ENCODE measurements at regions of chr11 and their contacts with region 1.

Region 1: GRCh38 chr11:124402326-124402922 is 3.6 kb upstream of the OR8B3 start:
- DNase-seq: peak; percentile 90
- H3K4me3 Mint-ChIP-seq: no peak overlapping the region
- H3K27ac Mint-ChIP-seq: no peak overlapping the region
- H3K4me1 Mint-ChIP-seq: no peaks in the 10 kb centered on the region
- H3K27me3 Mint-ChIP-seq: peaks cover 33% of the 10 kb centered on the region
- CTCF ChIP-seq: peak; percentile 69

Region 2: DNA sequence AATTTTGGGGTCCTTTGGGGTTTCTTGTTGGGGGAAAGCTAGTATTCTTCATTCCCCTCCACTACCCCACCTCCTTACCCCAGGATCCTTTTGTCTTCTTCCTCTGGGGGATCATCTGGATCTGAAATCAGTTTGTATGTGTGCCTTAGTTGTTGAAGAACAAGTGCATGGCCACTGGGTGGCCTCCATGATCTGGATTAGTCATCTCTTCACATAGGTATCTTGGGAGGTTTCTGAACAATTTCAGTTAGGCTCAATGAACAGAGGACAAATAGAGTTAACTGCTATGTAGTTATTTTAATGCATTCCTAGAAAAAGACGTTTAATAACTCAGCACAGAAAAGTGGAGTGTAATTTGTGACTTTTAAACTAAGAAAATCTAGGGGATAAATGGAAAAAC is 294.3 kb before region 1 on chr11:
- CTCF ChIA-PET with region 1: no interaction called
- POLR2A ChIA-PET with region 1: no interaction called
- intact Hi-C with region 1: loop called (anchors 1 kb)
- DNase-seq: peak; percentile 56
- H3K4me3 Mint-ChIP-seq: no peak overlapping the region
- H3K27ac Mint-ChIP-seq: no peak overlapping the region
- H3K4me1 Mint-ChIP-seq: no peaks in the 10 kb centered on the region
- H3K27me3 Mint-ChIP-seq: peaks cover 28% of the 10 kb centered on the region
- CTCF ChIP-seq: peak; percentile 20

Region 3: GRCh38 chr11:124415356-124415923 is 13.0 kb after region 1 on chr11:
- CTCF ChIA-PET with region 1: interaction called, 20 read pairs
- POLR2A ChIA-PET with region 1: no interaction called
- intact Hi-C with region 1: no loop called
- DNase-seq: peak; percentile 39
- H3K4me3 Mint-ChIP-seq: no peak overlapping the region
- H3K27ac Mint-ChIP-seq: no peak overlapping the region
- H3K4me1 Mint-ChIP-seq: no peaks in the 10 kb centered on the region
- H3K27me3 Mint-ChIP-seq: peaks cover 63% of the 10 kb centered on the region
- CTCF ChIP-seq: peak; percentile 67

Region 4: DNA sequence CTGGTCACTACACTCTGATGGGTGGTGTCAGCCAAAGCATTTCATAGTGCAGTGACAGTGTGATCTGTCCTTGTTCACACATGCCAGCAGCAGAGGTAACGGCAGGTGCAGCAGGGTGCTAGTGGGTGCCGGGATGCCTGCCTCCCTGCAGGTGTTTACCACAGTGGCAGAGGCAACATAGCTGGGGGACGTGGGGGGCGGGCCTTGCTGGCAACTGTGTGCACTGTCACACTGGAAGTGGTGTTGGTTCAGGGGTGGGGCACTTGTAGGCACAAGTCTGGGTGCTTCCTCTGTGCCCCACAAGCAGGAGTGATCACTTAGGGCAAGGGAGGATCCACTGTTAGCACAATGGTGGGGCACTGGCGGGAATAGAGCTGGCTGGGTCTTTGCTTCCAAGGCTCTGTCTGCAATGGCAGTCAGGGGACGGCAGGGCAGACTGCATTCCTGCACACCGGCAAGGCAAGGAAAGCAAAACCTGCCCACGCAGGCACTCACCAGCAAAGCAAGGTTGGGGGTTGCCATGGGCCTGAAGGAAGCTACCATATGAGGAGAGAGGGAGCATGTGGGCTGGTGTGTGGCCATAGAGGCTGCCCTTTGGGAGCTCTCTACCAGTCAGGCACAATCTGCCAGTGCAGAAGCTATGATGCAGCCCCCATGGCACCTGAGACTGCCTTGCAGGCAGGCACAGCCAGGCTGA is 107.7 kb after region 1 on chr11:
- CTCF ChIA-PET with region 1: no interaction called
- POLR2A ChIA-PET with region 1: no interaction called
- intact Hi-C with region 1: no loop called
- DNase-seq: no peak
- H3K4me3 Mint-ChIP-seq: no peak overlapping the region
- H3K27ac Mint-ChIP-seq: no peak overlapping the region
- H3K4me1 Mint-ChIP-seq: no peaks in the 10 kb centered on the region
- H3K27me3 Mint-ChIP-seq: peaks cover 69% of the 10 kb centered on the region
- CTCF ChIP-seq: no peak

Region 5: GRCh38 chr11:124586238-124586860 is 183.9 kb after region 1 on chr11:
- CTCF ChIA-PET with region 1: interaction called, 18 read pairs
- POLR2A ChIA-PET with region 1: no interaction called
- intact Hi-C with region 1: no loop called
- DNase-seq: peak; percentile 74
- H3K4me3 Mint-ChIP-seq: no peak overlapping the region
- H3K27ac Mint-ChIP-seq: no peak overlapping the region
- H3K4me1 Mint-ChIP-seq: no peaks in the 10 kb centered on the region
- H3K27me3 Mint-ChIP-seq: peaks cover 87% of the 10 kb centered on the region
- CTCF ChIP-seq: peak; percentile 52